WTC11 (cell line): ENCODE measurements at regions of chr2 and their contacts with region 1.

Region 1: DNA sequence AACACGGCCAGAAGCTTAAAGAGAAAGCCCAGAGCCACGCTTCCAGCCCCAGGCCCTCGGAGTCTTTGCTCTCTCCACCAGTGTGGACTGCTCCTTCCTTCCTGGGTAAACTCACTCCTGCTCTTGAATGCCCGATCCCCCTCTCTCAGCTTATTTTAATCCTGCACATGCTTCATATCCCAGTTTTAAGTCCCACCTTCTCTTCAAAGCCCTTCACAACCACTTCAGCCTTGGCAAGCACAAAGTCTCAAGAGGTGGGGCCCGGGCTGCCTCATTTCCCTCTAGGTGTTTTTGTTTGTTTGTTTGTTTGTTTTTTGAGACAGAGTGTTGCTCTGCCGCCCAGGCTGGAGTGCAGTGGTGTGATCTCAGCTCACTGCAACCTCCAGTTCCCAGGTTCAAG is 21.6 kb upstream of the CREG2 start:
- DNase-seq: no peak
- ATAC-seq: no peak
- H3K4me3 Mint-ChIP-seq: no peak overlapping the region
- H3K27ac Mint-ChIP-seq: no peak overlapping the region
- H3K4me1 Mint-ChIP-seq: peaks cover 11% of the 10 kb centered on the region; the same call in 1 of the 2 replicates
- H3K27me3 Mint-ChIP-seq: no peaks in the 10 kb centered on the region
- CTCF ChIP-seq: no peak

Region 2: GRCh38 chr2:101135412-101136296 is 273.3 kb before region 1 on chr2:
- CTCF ChIA-PET with region 1: no interaction called
- POLR2A ChIA-PET with region 1: no interaction called
- DNase-seq: peak; percentile 33
- ATAC-seq: peak; percentile 88
- H3K4me3 Mint-ChIP-seq: no peak overlapping the region
- H3K27ac Mint-ChIP-seq: peak overlapping the region; percentile 91; the same call in 1 of the 2 replicates
- H3K4me1 Mint-ChIP-seq: peaks cover 53% of the 10 kb centered on the region
- H3K27me3 Mint-ChIP-seq: no peaks in the 10 kb centered on the region
- CTCF ChIP-seq: no peak

Region 3: DNA sequence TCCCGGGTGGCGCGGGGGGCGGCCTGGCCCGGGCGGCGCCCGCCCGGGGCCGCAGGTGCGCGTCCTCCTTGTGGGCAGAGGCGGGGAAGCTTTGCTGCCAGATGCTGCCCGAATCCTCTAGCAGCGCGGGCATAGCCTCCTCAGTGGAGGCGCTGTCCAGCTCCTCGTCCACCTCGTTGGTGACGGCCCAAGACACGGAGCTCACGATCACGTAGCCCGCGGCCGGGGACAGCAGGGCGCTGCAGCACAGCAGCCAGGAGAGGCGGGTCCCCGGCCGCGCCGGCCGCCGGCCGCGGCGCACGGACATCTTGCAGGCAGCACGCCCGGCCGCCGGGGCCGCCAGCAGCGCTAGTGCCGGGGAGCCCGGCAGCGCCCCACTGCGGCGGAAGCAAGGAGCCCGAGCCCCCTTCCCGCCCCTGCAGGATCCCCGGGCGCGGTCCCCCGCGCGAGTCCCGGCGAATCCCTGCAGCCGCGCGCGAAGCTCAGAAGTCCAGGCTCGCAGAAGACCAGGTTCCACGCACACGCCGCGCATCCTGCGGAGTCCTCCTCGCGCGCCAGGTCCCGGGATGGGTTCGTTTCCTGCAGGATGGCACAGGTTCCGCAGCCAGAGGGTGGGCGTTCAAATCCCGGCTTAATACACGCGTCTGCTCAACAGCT is 21.6 kb before region 1 on chr2 and contains the start of gene CREG2:
- CTCF ChIA-PET with region 1: interaction called, 13 read pairs
- POLR2A ChIA-PET with region 1: no interaction called
- DNase-seq: peak; percentile 80
- ATAC-seq: peak; percentile 84
- H3K4me3 Mint-ChIP-seq: peak within 1 kb of the TSS; percentile 80
- H3K27ac Mint-ChIP-seq: no peak within 1 kb of the TSS
- H3K4me1 Mint-ChIP-seq: peaks cover 22% of the 10 kb centered on the region
- H3K27me3 Mint-ChIP-seq: peaks cover 48% of the 10 kb centered on the region
- CTCF ChIP-seq: peak; percentile 34; the same call in 1 of the 2 replicates
- total RNA-seq, gene CREG2: 1.1 to 1.7 TPM (median 1.6 TPM) in 3 replicates

Region 4: DNA sequence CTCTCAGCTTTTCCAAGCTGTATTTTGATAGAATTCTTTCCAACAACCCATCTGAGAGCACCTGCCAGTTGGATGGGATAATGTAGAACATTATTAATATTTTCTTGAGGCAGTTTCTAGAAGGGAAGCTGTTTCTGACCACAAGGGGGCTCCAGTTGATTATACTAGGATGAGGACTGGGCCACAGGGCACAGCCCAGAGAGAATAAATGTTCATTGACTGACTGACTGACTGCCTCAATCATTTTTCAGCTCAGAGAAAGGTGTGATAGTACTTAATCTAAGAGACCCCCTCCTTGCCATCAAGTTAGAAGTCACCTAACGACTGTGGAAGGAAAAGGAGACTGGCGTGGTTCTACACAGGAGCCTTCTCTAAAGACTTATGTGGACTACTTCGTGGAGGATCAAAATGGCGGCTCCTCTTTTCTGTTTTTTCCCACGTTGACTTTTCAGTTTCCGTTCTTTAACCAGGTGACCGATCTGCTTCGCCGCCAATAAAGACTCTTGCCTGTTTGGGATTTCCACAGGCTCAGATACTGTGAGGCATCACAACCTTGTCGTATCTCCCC is 10.3 kb after region 1 on chr2:
- CTCF ChIA-PET with region 1: interaction called, 13 read pairs
- POLR2A ChIA-PET with region 1: no interaction called
- DNase-seq: peak; percentile 47
- ATAC-seq: peak; percentile 66
- H3K4me3 Mint-ChIP-seq: no peak overlapping the region
- H3K27ac Mint-ChIP-seq: no peak overlapping the region
- H3K4me1 Mint-ChIP-seq: no peaks in the 10 kb centered on the region
- H3K27me3 Mint-ChIP-seq: no peaks in the 10 kb centered on the region; the same call in 1 of the 2 replicates
- CTCF ChIP-seq: peak; percentile 66

Region 5: GRCh38 chr2:101473911-101474701 is 65.2 kb after region 1 on chr2:
- CTCF ChIA-PET with region 1: no interaction called
- POLR2A ChIA-PET with region 1: no interaction called
- DNase-seq: peak; percentile 65
- ATAC-seq: peak; percentile 80
- H3K4me3 Mint-ChIP-seq: peak overlapping the region; percentile 69
- H3K27ac Mint-ChIP-seq: no peak overlapping the region
- H3K4me1 Mint-ChIP-seq: peaks cover 22% of the 10 kb centered on the region
- H3K27me3 Mint-ChIP-seq: peaks cover 30% of the 10 kb centered on the region
- CTCF ChIP-seq: no peak

Region 6: GRCh38 chr2:102141970-102142828 is 733.3 kb after region 1 on chr2 and contains the start of gene IL1R1:
- CTCF ChIA-PET with region 1: no interaction called
- POLR2A ChIA-PET with region 1: no interaction called
- DNase-seq: peak; percentile 62
- ATAC-seq: peak; percentile 86
- H3K4me3 Mint-ChIP-seq: peak within 1 kb of the TSS; percentile 74
- H3K27ac Mint-ChIP-seq: no peak within 1 kb of the TSS
- H3K4me1 Mint-ChIP-seq: peaks cover 17% of the 10 kb centered on the region
- H3K27me3 Mint-ChIP-seq: peaks cover 41% of the 10 kb centered on the region
- CTCF ChIP-seq: no peak
- total RNA-seq, gene IL1R1: 0.37 to 0.78 TPM (median 0.55 TPM) in 3 replicates